H1 (cell line): ENCODE measurements at regions of chr2 and their contacts with region 1.

Region 1: DNA sequence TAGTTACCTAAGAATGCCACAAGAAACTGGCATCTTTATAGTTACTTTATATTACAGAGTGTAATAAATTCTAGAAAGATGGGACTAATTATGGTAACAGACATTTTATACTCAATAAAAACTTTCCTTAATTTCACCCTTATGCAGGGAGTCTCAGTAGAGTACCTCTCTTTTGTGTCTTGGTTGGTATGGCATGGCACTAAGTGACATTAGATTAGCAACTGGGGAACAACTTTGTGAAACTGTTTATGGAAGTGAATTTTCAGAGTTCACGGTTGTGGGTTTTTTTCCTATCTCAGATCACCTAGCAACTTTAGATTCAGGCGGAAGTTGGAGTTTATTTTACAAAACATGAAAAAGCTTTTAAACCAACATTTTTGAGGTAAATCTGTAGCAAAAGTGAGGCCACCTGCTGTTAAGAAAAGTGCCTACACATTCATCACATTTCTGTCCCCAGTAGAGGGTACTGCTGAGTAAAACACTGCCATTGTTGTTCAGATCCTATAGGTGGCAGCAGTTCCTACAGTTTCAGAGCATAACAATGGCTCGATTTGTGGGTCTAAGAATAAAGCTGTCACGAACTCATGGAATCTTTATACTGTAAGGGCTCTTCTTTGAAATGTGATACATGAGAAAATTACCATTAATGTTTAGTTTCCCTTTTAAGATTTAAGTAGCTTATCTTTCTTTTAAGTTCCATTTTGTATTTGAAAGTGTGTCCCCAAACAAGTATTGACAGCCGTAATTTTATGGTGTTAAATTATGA is 117.6 kb downstream of the CAMKMT start:
- DNase-seq: peak in 1 of 2 experiments; percentile 5
- H3K4me3 ChIP-seq: no peak overlapping the region
- H3K27ac ChIP-seq: no peak overlapping the region
- H3K4me1 ChIP-seq: peaks cover 0 to 3% (median 1%) of the 10 kb centered on the region in 4 experiments; a peak in 1 of 7 replicates
- H3K27me3 ChIP-seq: peaks cover 0 to 1% (median 0%) of the 10 kb centered on the region in 4 experiments; a peak in 1 of 7 replicates
- CTCF ChIP-seq: peak in 2 of 3 experiments; percentile 100; a peak in 3 of 4 replicates
- EP300 ChIP-seq: no peak
- POLR2A ChIP-seq: no peak
- RAD21 ChIP-seq: peak; percentile 94 to 97

Region 2: DNA sequence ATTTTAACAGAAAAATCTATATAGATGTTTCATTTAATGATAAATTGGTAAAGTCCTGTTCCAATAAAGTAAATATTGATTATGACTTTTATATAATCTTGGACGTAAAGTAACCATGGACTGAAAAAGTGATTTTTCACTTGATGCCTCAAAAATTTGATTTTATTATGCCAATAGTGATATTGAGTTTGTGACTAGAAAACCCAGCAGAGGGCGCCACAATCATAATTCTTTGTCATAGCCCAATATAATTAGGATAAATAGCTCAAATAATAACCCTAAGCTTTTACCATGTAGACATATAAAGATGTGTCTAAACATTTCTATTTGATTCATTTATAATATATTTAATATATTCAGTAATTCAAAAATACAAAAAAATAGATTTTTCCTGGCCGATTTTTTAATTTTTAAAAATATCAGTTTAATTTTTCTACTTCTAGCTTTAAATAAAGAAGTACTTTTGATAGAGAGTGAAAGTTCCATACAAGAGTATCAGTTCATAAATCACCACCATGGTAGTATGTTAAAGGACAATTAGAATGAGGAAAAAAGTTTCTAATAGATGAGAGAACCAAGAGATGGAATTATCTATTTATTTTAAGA is 86.9 kb before region 1 on chr2:
- CTCF ChIA-PET with region 1: interaction called, 103 read pairs
- POLR2A ChIA-PET with region 1: no interaction called
- DNase-seq: no peak
- H3K4me3 ChIP-seq: no peak overlapping the region
- H3K27ac ChIP-seq: no peak overlapping the region
- H3K4me1 ChIP-seq: peaks cover 0 to 4% (median under 1%) of the 10 kb centered on the region in 4 experiments; a peak in 1 of 7 replicates
- H3K27me3 ChIP-seq: no peaks in the 10 kb centered on the region
- CTCF ChIP-seq: peak in 2 of 3 experiments; percentile 35 to 37; a peak in 2 of 4 replicates
- EP300 ChIP-seq: no peak
- POLR2A ChIP-seq: no peak
- RAD21 ChIP-seq: peak; percentile 59 to 63

Region 3: DNA sequence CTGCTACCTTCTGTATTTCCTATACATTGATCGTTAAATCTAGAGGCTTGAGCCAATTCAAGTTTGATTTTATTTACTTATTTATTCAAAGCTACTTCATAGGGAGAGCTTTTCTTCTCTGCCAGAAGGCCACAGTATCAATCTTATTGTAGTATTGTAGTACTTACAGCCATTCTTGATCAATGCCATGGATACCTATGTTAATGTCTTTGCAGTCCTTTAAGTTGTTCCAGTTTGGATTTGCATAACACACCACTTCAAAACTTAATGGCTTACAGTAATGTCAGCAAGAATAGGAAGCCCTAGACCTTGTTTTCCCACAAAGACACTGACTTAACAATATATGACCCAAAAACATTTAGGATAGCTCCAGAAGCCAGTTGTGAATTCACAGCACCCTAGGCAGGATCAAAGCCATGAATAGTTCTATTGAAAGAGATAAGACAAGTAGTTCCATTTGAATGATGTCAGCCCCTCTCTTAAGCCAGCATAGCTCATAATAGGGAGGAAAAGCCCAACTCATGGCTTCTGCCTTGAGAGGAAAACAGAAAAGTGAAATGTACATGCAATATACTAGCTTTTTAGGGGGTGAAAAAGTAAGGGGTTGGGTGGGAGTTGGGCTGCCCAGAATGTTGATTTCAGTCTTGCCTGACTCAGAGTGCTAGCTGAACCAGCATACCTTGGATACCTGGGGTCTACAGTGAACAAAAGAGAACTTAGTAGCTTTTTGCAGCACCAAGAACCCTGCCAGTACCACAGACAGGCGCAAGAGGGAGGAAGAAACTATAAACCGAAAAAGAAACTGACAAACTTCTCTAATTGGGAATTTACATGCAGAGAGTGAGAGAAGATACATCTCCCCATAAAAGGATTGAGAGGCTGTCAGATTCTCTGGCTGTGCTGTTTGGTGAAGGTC is 16.1 kb before region 1 on chr2:
- CTCF ChIA-PET with region 1: interaction called, 26 read pairs
- POLR2A ChIA-PET with region 1: no interaction called
- DNase-seq: peak in 1 of 2 experiments; percentile 17
- H3K4me3 ChIP-seq: peak overlapping the region in 1 of 4 experiments; percentile 35; a peak in 1 of 8 replicates
- H3K27ac ChIP-seq: peak overlapping the region; percentile 71; the same call in 1 of the 2 replicates
- H3K4me1 ChIP-seq: peaks cover 0 to 13% (median 6%) of the 10 kb centered on the region in 4 experiments; a peak in 4 of 7 replicates
- H3K27me3 ChIP-seq: no peaks in the 10 kb centered on the region
- CTCF ChIP-seq: peak in 2 of 3 experiments; percentile 40 to 49; a peak in 3 of 4 replicates
- EP300 ChIP-seq: no peak
- POLR2A ChIP-seq: no peak
- RAD21 ChIP-seq: peak; percentile 35 to 42

Region 4: GRCh38 chr2:44560961-44561360 is 81.7 kb after region 1 on chr2:
- CTCF ChIA-PET with region 1: interaction called, 11 read pairs
- POLR2A ChIA-PET with region 1: no interaction called
- DNase-seq: no peak
- H3K4me3 ChIP-seq: no peak overlapping the region
- H3K27ac ChIP-seq: no peak overlapping the region
- H3K4me1 ChIP-seq: no peaks in the 10 kb centered on the region
- H3K27me3 ChIP-seq: no peaks in the 10 kb centered on the region
- CTCF ChIP-seq: no peak
- EP300 ChIP-seq: no peak
- POLR2A ChIP-seq: no peak
- RAD21 ChIP-seq: no peak

Region 5: GRCh38 chr2:44668336-44668735 is 189.0 kb after region 1 on chr2:
- CTCF ChIA-PET with region 1: interaction called, 23 read pairs
- POLR2A ChIA-PET with region 1: no interaction called
- DNase-seq: no peak
- H3K4me3 ChIP-seq: no peak overlapping the region
- H3K27ac ChIP-seq: no peak overlapping the region
- H3K4me1 ChIP-seq: peaks cover 0 to 5% (median under 1%) of the 10 kb centered on the region in 4 experiments; a peak in 2 of 7 replicates
- H3K27me3 ChIP-seq: no peaks in the 10 kb centered on the region
- CTCF ChIP-seq: peak in 2 of 3 experiments; percentile 56 to 77; a peak in 2 of 4 replicates
- EP300 ChIP-seq: no peak
- POLR2A ChIP-seq: no peak
- RAD21 ChIP-seq: peak; percentile 65 to 71

Region 6: GRCh38 chr2:44715671-44716081 is 236.4 kb after region 1 on chr2:
- CTCF ChIA-PET with region 1: interaction called, 42 read pairs
- POLR2A ChIA-PET with region 1: no interaction called
- DNase-seq: peak in 1 of 2 experiments; percentile 47
- H3K4me3 ChIP-seq: no peak overlapping the region
- H3K27ac ChIP-seq: no peak overlapping the region
- H3K4me1 ChIP-seq: no peaks in the 10 kb centered on the region; a peak in 1 of 7 replicates
- H3K27me3 ChIP-seq: no peaks in the 10 kb centered on the region
- CTCF ChIP-seq: peak; percentile 31 to 82 (median 75)
- EP300 ChIP-seq: no peak
- POLR2A ChIP-seq: no peak
- RAD21 ChIP-seq: peak; percentile 94 to 96

Region 7: GRCh38 chr2:44793322-44793870 is 314.1 kb after region 1 on chr2:
- CTCF ChIA-PET with region 1: interaction called, 12 read pairs
- POLR2A ChIA-PET with region 1: no interaction called
- DNase-seq: peak in 1 of 2 experiments; percentile 59
- H3K4me3 ChIP-seq: no peak overlapping the region
- H3K27ac ChIP-seq: no peak overlapping the region
- H3K4me1 ChIP-seq: peaks cover 9 to 23% (median 16%) of the 10 kb centered on the region in 4 experiments
- H3K27me3 ChIP-seq: no peaks in the 10 kb centered on the region; a peak in 3 of 7 replicates
- CTCF ChIP-seq: no peak
- EP300 ChIP-seq: no peak
- POLR2A ChIP-seq: no peak
- RAD21 ChIP-seq: no peak

Region 8: DNA sequence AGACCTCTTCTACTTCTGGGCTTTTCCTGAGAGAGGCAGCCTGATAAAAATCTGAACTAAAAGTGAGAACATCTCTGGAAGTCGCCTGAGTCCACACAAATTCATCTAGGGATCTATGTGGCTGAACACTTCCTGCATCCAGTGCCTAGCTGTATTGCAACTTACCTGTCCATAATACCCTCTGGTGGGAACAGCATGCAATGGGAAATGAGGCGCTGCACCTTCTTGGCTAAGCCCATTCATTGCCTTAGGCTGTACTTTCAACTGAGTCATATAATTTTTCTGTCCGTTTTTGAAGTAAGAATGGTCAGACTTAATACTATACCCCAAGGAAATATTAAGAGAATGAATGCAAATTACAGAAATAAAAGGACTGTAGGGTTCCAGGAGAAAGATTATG is 507.7 kb after region 1 on chr2:
- CTCF ChIA-PET with region 1: no interaction called
- POLR2A ChIA-PET with region 1: no interaction called
- DNase-seq: no peak
- H3K4me3 ChIP-seq: no peak overlapping the region
- H3K27ac ChIP-seq: no peak overlapping the region
- H3K4me1 ChIP-seq: no peaks in the 10 kb centered on the region
- H3K27me3 ChIP-seq: no peaks in the 10 kb centered on the region
- CTCF ChIP-seq: no peak
- EP300 ChIP-seq: no peak
- POLR2A ChIP-seq: no peak
- RAD21 ChIP-seq: no peak